CD4-positive, alpha-beta memory T cell (primary cell): ENCODE measurements at regions of chr10 and their contacts with region 1.

Region 1: GRCh38 chr10:102764389-102765178 is 20.8 kb downstream of the WBP1L start:
- DNase-seq: no peak
- H3K4me3 ChIP-seq: no peak overlapping the region
- H3K4me3 Mint-ChIP-seq: no peak overlapping the region
- H3K27ac ChIP-seq: no peak overlapping the region
- H3K27ac Mint-ChIP-seq: peak overlapping the region in 1 of 7 donors; percentile 47
- H3K4me1 ChIP-seq: peaks cover 13% of the 10 kb centered on the region
- H3K4me1 Mint-ChIP-seq: peaks cover 18 to 38% (median 30%) of the 10 kb centered on the region in 4 donors
- H3K27me3 ChIP-seq: no peaks in the 10 kb centered on the region
- H3K27me3 Mint-ChIP-seq: no peaks in the 10 kb centered on the region

Region 2: GRCh38 chr10:101920546-101920945 is 844.0 kb before region 1 on chr10:
- CTCF ChIA-PET with region 1: no interaction called
- POLR2A ChIA-PET with region 1: no interaction called
- intact Hi-C with region 1: no loop called
- DNase-seq: no peak
- H3K4me3 ChIP-seq: no peak overlapping the region
- H3K4me3 Mint-ChIP-seq: no peak overlapping the region
- H3K27ac ChIP-seq: no peak overlapping the region
- H3K27ac Mint-ChIP-seq: no peak overlapping the region
- H3K4me1 ChIP-seq: no peaks in the 10 kb centered on the region
- H3K4me1 Mint-ChIP-seq: peaks cover 0 to 7% (median 4%) of the 10 kb centered on the region in 4 donors
- H3K27me3 ChIP-seq: no peaks in the 10 kb centered on the region
- H3K27me3 Mint-ChIP-seq: no peaks in the 10 kb centered on the region

Region 3: DNA sequence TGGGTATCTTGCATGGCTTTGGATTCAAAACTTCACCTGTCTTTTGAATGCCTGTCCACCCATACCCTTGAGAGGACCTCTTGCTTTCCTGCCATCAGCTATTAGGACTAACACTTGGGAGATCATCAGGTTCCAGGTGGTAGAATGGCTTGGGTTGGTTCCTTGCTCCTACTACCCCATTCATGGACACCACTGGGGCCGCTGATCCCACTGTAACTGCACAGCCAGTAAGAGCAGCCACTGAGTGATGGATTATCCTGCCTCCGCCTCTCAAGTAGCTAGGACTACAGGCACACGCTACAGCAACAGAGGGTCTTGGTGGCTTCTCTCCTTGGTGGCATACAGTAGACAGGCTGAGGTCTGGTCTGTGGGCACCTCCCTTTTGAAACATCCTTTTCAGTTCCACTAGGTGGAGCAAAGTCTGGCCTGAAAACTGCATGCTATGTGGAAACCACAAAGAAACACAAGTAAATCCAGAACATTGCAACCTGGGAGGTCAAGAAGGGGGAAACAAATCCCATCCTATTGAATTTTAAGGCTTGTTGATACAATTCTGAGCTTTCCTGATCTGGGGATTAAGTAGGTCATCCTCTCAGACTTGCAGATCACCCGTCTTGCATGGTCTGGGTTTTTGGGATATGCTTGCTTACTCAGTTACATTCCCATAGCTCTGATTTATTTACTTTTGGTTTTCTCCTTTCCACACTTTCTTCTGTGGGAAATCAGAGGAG is 11.5 kb before region 1 on chr10:
- CTCF ChIA-PET with region 1: interaction called, 15 read pairs
- POLR2A ChIA-PET with region 1: no interaction called
- intact Hi-C with region 1: no loop called
- DNase-seq: peak in 3 of 5 donors; percentile 9 to 16 (median 14)
- H3K4me3 ChIP-seq: no peak overlapping the region
- H3K4me3 Mint-ChIP-seq: peak overlapping the region in 4 of 8 donors; percentile 33 to 45 (median 39)
- H3K27ac ChIP-seq: no peak overlapping the region
- H3K27ac Mint-ChIP-seq: peak overlapping the region; percentile 25 to 83 (median 59)
- H3K4me1 ChIP-seq: peaks cover 35% of the 10 kb centered on the region
- H3K4me1 Mint-ChIP-seq: peaks cover 40 to 62% (median 48%) of the 10 kb centered on the region in 4 donors
- H3K27me3 ChIP-seq: no peaks in the 10 kb centered on the region
- H3K27me3 Mint-ChIP-seq: no peaks in the 10 kb centered on the region